MCF 10A (cell line): ENCODE measurements at regions of chr5 and their contacts with region 1.

Region 1: DNA sequence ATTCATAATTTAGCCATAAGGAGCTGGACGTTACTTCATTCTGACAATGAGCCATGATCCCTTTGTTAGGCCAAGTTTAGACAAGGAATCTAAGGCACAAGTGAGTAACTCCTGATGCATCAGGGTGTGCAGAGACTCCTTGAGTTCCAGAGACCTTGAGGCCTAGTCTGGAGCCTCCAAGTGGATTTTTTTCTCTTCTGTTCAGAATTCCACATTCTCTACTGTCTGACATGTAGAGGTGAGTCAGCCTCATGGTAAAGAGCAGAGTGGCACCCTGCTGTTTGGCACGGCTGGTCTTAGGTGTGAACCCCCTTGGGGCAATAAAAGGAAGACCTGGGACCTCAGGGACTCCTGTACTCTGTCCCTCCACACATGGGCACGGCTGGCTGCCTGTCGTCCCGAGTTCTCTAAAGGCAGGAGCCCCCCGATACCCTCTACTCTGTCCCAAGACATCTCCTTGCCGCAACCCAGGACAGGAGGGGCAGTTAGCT is 22.0 kb upstream of the TGFBI start:
- DNase-seq: peak; percentile 99
- H3K4me3 Mint-ChIP-seq: peak overlapping the region; percentile 15
- H3K27ac Mint-ChIP-seq: peak overlapping the region; percentile 93
- H3K4me1 Mint-ChIP-seq: peaks cover 51% of the 10 kb centered on the region
- H3K27me3 Mint-ChIP-seq: no peaks in the 10 kb centered on the region
- CTCF ChIP-seq: no peak

Region 2: DNA sequence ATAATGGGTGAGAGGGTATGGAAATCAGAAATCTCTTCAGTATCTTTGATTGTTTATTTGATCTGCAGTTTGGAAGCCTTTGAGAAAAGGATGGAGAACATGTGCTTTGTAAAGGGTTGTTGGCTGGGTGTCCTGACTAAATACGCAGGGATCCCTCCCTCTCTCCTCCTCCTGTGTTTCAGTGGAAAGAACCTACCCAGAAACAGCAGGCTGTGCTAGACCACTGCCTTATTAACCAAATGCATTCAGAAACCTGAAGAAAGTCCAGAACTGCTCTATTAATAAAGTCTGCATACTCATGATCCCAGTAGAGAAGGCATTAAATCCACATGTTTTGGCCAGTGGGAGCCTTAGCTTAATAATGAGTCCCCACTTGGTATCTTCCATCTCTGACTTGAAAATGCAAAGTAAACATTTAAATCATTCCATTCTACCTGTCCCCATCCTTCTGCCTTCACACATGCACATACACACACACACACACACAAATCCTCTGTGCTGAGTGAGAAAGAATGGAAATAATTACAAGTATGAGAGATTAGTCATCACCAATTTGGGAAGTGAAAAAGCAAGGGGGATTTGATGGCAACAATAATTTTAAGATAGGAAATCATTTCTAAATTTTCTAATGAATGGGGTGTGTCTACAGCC is 42.0 kb before region 1 on chr5:
- CTCF ChIA-PET with region 1: interaction called, 4 read pairs
- POLR2A ChIA-PET with region 1: interaction called, 10 read pairs
- intact Hi-C with region 1: no loop called
- DNase-seq: no peak
- H3K4me3 Mint-ChIP-seq: no peak overlapping the region
- H3K27ac Mint-ChIP-seq: no peak overlapping the region
- H3K4me1 Mint-ChIP-seq: peaks cover 7% of the 10 kb centered on the region
- H3K27me3 Mint-ChIP-seq: no peaks in the 10 kb centered on the region
- CTCF ChIP-seq: no peak

Region 3: DNA sequence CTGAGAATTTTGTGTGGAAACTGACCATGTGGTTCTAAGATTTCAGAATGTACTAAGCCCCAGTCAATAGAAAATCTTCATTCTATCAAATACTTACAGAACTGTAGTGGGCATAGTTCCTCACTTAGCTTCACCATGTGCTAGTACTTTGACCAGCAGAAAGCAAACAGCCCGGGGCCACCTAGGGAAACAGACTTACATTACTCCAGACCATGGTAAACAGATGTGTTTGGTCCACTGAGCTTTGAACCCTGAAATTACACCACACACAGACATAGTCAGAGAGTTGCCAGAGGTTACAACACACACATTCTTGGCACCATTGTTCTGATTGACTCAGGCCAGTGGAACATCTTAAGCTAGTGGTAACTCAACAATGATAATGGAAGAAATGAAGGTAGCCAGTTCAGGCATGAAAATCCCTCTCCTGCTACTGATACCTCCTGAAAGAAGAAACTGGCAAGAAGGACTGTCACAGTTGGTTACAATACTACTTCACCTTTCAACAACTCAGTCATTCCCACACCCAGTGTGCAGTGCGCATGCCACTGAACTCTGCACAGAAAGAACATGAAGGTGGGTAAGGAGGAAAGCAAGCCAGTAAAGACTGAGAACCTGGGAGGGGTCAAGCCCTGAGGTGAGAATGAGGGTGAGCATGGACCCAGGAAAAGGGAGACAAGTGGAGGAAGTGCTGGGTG is 33.3 kb before region 1 on chr5:
- CTCF ChIA-PET with region 1: interaction called, 3 read pairs
- POLR2A ChIA-PET with region 1: interaction called, 23 read pairs
- intact Hi-C with region 1: no loop called
- DNase-seq: peak; percentile 94
- H3K4me3 Mint-ChIP-seq: no peak overlapping the region
- H3K27ac Mint-ChIP-seq: no peak overlapping the region
- H3K4me1 Mint-ChIP-seq: peaks cover 23% of the 10 kb centered on the region
- H3K27me3 Mint-ChIP-seq: no peaks in the 10 kb centered on the region
- CTCF ChIP-seq: no peak

Region 4: GRCh38 chr5:135993880-135994636 is 12.7 kb before region 1 on chr5:
- CTCF ChIA-PET with region 1: interaction called, 13 read pairs
- POLR2A ChIA-PET with region 1: interaction called, 1,604 read pairs
- intact Hi-C with region 1: no loop called
- DNase-seq: peak; percentile 83
- H3K4me3 Mint-ChIP-seq: no peak overlapping the region
- H3K27ac Mint-ChIP-seq: peak overlapping the region; percentile 95
- H3K4me1 Mint-ChIP-seq: peaks cover 39% of the 10 kb centered on the region
- H3K27me3 Mint-ChIP-seq: no peaks in the 10 kb centered on the region
- CTCF ChIP-seq: no peak

Region 5: GRCh38 chr5:136020383-136021015 is 13.7 kb after region 1 on chr5:
- CTCF ChIA-PET with region 1: interaction called, 171 read pairs
- POLR2A ChIA-PET with region 1: interaction called, 1,604 read pairs
- intact Hi-C with region 1: no loop called
- DNase-seq: peak; percentile 100
- H3K4me3 Mint-ChIP-seq: peak overlapping the region; percentile 49
- H3K27ac Mint-ChIP-seq: peak overlapping the region; percentile 63
- H3K4me1 Mint-ChIP-seq: peaks cover 61% of the 10 kb centered on the region
- H3K27me3 Mint-ChIP-seq: no peaks in the 10 kb centered on the region
- CTCF ChIP-seq: no peak

Region 6: DNA sequence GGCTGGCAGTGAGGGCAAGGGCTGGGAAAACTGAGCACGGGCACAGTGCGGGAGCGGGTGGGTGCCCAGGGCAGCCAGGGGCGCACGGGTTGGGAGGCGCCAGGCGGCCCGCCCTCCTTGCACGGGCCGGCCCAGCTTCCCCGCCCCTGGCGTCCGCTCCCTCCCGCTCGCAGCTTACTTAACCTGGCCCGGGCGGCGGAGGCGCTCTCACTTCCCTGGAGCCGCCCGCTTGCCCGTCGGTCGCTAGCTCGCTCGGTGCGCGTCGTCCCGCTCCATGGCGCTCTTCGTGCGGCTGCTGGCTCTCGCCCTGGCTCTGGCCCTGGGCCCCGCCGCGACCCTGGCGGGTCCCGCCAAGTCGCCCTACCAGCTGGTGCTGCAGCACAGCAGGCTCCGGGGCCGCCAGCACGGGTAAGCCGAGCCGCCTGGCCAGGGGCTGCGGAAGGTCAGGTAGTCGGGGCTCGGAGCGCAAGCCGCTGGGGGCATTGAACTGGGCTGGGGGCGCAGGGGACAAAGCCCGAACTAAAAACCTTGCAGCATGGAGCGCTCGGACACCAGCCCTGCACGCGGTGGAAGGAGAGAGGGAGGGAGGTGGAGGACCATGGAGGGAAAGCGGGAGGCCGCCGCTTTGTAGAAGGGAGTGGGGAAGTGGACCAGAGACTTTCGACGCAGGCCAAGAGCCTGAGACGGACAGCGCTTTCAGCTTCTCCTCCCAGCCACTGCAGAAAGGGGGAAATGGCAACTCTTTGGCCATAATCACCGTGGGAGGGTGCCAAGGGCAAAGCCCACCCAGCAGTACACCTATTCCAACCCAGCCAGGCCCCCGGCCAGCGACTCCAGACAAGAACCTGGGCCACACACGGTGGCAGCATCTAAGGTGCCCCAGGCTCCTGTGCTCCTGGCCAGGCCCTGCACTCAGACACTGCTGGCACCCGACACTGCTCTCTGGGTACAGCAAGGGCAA is 22.3 kb after region 1 on chr5 and contains the start of gene TGFBI:
- CTCF ChIA-PET with region 1: interaction called, 171 read pairs
- POLR2A ChIA-PET with region 1: interaction called, 1,604 read pairs
- intact Hi-C with region 1: loop called (anchors 2 kb)
- DNase-seq: peak; percentile 87
- H3K4me3 Mint-ChIP-seq: peak within 1 kb of the TSS; percentile 80
- H3K27ac Mint-ChIP-seq: peak within 1 kb of the TSS; percentile 76
- H3K4me1 Mint-ChIP-seq: peaks cover 57% of the 10 kb centered on the region
- H3K27me3 Mint-ChIP-seq: no peaks in the 10 kb centered on the region
- CTCF ChIP-seq: no peak
- total RNA-seq, gene TGFBI: 623 and 892 TPM in 2 replicates

Region 7: GRCh38 chr5:137344723-137345322 is 1338.0 kb after region 1 on chr5:
- CTCF ChIA-PET with region 1: no interaction called
- POLR2A ChIA-PET with region 1: no interaction called
- intact Hi-C with region 1: no loop called
- DNase-seq: peak; percentile 78
- H3K4me3 Mint-ChIP-seq: no peak overlapping the region
- H3K27ac Mint-ChIP-seq: no peak overlapping the region
- H3K4me1 Mint-ChIP-seq: peaks cover 8% of the 10 kb centered on the region
- H3K27me3 Mint-ChIP-seq: no peaks in the 10 kb centered on the region
- CTCF ChIP-seq: peak; percentile 94